Common myeloid progenitor, CD34-positive (primary cell): ENCODE measurements at regions of chr2 and their contacts with region 1.

Region 1: GRCh38 chr2:54899576-54900200 is 150.6 kb downstream of the RTN4 start:
- DNase-seq: peak; percentile 46 to 72 (median 69)
- H3K4me3 ChIP-seq: no peak overlapping the region
- H3K27ac ChIP-seq: no peak overlapping the region
- H3K4me1 ChIP-seq: peaks cover 0 to 7% (median 0%) of the 10 kb centered on the region in 4 experiments
- H3K27me3 ChIP-seq: no peaks in the 10 kb centered on the region

Region 2: DNA sequence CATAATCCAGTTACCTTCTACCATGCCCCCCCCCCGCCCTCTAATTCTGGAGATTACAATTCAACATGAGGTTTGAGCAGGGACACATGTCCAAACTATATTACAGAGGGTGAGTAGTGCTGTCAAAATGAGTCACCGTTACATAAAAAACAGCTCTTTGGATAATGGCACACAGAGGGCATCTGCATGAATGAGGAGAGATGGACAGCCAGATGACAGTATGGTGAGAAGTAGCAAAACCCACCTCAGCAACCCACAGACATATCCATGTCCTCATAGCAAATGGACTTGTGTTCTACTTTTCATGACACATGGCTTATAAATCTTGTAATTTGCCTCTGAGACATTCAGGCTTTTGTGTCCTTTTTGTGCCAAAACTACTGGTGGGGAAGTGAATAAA is 44.3 kb before region 1 on chr2:
- CTCF ChIA-PET with region 1: no interaction called
- POLR2A ChIA-PET with region 1: no interaction called
- DNase-seq: no peak
- H3K4me3 ChIP-seq: no peak overlapping the region
- H3K27ac ChIP-seq: no peak overlapping the region
- H3K4me1 ChIP-seq: no peaks in the 10 kb centered on the region
- H3K27me3 ChIP-seq: no peaks in the 10 kb centered on the region

Region 3: GRCh38 chr2:54975598-54976492 is 76.2 kb after region 1 on chr2:
- CTCF ChIA-PET with region 1: interaction called, 10 read pairs
- POLR2A ChIA-PET with region 1: no interaction called
- DNase-seq: no peak
- H3K4me3 ChIP-seq: no peak overlapping the region
- H3K27ac ChIP-seq: no peak overlapping the region
- H3K4me1 ChIP-seq: peaks cover 8 to 35% (median 22%) of the 10 kb centered on the region in 4 experiments
- H3K27me3 ChIP-seq: no peaks in the 10 kb centered on the region

Region 4: GRCh38 chr2:55003706-55004639 is 104.3 kb after region 1 on chr2:
- CTCF ChIA-PET with region 1: interaction called, 85 read pairs
- POLR2A ChIA-PET with region 1: no interaction called
- DNase-seq: no peak
- H3K4me3 ChIP-seq: no peak overlapping the region
- H3K27ac ChIP-seq: no peak overlapping the region
- H3K4me1 ChIP-seq: peaks cover 11 to 40% (median 17%) of the 10 kb centered on the region in 4 experiments
- H3K27me3 ChIP-seq: no peaks in the 10 kb centered on the region

Region 5: DNA sequence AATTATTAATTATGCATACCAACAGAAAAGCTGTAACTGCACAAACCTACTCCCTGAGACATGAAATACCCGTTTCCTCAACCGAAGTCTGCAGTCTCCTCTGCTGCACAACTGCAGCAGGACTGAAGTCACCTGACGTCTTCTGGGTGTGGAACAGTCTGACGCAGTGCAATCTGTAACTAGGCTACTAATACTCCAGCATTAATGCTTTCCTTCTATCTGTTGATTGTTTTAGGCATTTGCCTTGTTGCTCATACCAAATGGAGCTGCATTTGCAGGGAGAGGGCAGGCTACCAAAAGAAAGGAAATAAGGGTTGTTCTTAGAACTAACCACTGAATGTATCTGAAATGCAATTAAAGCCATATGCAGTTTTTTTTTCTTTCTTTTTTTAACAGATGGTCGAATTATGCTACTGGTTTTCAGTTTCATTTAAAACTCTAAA is 110.5 kb after region 1 on chr2:
- CTCF ChIA-PET with region 1: interaction called, 85 read pairs
- POLR2A ChIA-PET with region 1: no interaction called
- DNase-seq: peak; percentile 50 to 90 (median 82)
- H3K4me3 ChIP-seq: peak overlapping the region in 6 of 7 experiments; percentile 58 to 82 (median 74)
- H3K27ac ChIP-seq: peak overlapping the region; percentile 28 to 66
- H3K4me1 ChIP-seq: peaks cover 19 to 65% (median 45%) of the 10 kb centered on the region in 4 experiments
- H3K27me3 ChIP-seq: no peaks in the 10 kb centered on the region

Region 6: DNA sequence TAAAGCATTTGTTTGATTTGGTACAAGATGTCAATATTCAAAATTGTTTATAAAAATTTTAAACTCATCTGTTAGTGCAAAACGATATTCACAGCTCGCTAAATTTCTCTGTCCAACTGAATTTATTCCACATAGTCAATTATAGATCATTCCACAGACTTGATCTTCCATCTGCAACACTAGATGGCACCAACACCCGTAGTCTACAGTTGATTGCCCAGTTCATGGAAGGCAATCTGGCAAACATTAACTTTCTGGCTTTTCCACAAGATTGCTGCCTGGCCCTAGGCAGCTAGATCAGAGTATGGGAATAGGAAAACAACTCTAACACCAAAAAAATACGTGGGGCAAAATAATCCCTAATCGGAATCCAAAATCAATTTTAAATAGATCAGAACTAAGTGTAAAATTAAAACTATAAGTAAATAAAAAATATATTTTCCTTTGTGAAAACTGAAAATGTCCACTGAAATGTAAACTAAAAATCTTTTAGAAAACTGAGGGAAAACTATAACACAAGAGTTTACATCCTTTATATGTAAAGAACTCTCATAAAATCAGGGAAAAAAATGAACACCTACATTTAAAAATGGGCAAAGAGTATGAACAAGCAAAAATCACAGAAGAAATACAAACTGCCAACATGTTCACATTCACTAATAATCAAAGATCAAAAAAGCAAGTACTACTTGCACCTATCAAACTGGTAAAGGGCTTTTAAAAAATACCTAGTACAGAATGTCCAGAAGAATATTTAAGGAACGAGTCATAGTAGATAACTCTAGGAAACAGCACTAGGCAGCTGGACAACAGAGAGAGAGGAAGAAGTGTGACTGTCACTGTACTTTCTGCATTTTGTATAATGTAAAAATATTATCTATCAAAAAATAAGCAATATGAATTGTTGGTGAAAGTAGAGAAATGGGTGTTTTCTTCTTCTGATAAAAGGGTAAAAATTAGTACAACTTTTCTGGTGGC is 115.6 kb after region 1 on chr2:
- CTCF ChIA-PET with region 1: interaction called, 85 read pairs
- POLR2A ChIA-PET with region 1: no interaction called
- DNase-seq: peak; percentile 63 to 71 (median 68)
- H3K4me3 ChIP-seq: no peak overlapping the region
- H3K27ac ChIP-seq: no peak overlapping the region
- H3K4me1 ChIP-seq: peaks cover 28 to 67% (median 45%) of the 10 kb centered on the region in 4 experiments
- H3K27me3 ChIP-seq: no peaks in the 10 kb centered on the region

Region 7: DNA sequence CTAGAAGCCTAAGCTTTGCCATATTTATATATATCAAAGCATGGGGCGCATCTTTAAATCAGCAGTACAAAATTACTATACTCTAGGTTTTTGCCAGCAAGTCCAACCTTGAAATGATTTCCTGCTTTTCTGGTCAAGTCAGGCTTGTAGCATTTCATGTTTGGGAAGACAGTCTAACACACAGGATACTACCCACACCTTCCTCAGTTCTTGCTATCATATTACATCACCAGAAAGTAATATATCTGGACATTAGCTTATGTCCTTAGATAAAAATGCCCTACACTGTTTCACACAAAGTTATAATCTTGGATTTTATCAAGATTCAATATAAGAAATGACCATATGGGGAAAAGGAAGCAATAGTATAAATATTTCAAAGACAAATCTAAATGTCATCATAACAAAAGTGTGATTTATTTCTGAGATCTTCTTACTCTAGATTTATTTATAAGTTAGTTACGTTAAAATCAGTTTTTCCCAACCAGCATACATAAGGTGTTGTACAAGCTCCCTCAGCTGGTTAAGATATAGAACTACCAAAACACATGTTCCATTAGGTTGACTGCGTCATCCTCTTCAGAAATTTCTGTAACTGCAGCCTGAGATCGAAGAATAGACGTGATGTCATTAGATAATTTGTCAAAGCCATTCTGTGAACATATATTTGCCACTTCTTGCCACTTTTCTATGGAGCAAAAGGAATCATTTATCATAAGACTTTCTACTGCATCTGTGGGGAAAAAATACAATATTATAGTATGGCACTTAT is 275.8 kb after region 1 on chr2:
- CTCF ChIA-PET with region 1: interaction called, 83 read pairs
- POLR2A ChIA-PET with region 1: no interaction called
- DNase-seq: peak; percentile 74 to 83 (median 82)
- H3K4me3 ChIP-seq: peak overlapping the region in 1 of 7 experiments; percentile 19
- H3K27ac ChIP-seq: no peak overlapping the region
- H3K4me1 ChIP-seq: peaks cover 0 to 6% (median 4%) of the 10 kb centered on the region in 4 experiments
- H3K27me3 ChIP-seq: no peaks in the 10 kb centered on the region